Posterior vena cava (tissue), 2 donors: ENCODE measurements at regions of chr5 and their contacts with region 1.

Region 1: DNA sequence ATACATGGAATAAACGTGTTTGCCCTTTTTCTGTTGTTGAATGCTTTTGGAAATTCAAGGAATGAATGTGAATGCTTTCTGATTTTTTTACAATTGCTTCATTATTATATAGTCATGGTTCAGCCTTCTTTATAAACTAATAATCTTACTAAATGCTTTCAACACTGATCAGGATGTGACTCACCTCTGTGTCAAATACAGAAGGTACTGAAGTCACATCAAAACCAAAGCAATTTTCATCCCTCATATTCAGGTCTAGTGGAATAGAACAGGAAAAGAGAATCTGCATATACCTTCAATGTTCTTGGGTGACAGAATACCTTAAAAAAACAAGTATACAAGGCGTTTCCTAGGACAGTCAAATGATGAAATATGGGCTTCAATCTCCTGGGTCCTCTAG is 170.7 kb downstream of the PDE4D start:
- DNase-seq: no peak

Region 2: DNA sequence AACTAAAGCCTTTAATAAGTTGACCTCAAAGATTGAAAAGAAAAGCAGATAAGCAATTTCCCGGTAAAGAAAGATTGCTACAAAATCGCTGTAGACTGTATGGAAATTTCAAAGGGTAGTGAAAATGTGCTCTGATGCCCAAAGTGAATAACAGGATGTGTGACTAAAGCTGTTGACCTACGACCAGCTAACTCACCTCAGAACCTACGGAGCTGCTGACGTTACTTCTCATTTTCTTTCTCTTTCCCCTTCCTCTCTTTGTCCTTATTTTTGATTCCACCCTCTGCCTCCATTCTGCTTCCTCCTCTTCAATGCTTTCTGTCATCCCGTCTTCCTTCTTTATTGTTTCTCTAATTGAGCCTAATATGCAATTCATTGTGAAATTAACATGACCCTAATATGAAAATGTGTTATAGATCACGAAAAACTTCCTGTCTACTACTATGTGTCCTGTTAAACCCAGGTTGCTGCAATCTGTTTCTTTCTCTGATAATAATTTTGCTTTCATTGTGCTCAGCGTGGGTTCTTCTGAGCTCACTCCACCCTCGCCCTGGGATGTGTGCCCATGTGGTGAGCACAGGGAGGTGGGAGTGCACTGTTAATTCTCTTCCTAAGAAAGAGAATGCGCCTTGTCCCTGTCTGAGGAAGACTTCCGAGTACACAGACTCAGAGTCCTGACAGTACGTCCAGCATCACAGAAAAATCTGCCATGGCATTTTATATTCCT is 67.7 kb after region 1 on chr5:
- intact Hi-C with region 1: loop called in 1 of 2 experiments (anchors 2 kb)
- DNase-seq: no peak

Region 3: DNA sequence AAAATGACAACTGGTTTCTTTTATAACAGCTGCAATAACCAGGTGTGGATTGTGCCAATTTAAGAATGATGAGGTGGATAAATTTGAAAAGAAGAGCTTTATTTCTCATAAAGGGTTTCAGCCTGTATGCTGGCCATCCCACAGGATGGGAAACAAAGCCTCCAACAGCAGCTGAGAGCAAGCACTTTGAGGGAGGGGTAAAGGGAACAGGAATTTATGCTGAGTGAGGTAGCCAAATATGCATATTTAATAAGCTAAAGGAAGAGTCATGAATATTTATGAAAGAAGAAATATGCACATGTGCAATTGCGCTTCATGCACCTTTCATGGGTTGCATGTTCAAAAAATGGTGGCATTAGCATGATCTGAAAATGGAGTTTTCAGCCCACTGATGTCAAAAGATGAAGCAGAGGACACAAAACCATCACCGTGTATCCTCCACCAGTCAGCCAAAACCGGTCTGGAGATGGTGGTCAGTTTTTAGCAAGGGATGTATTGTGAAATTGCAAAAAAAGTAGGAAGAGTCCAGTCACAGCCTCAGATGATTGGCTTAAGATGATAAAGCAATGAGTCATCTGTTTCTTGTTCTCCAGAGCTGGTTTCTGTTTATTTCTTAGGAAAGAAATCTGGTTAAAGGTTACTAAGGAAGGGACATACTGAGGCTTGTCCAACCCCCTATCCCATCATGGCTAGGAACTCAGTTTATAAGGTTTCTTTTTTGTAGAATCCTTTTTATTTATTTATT is 929.2 kb after region 1 on chr5:
- intact Hi-C with region 1: no loop called
- DNase-seq: no peak